ENCODE measurements at regions of chr2 and their contacts with region 1.

Region 1: DNA sequence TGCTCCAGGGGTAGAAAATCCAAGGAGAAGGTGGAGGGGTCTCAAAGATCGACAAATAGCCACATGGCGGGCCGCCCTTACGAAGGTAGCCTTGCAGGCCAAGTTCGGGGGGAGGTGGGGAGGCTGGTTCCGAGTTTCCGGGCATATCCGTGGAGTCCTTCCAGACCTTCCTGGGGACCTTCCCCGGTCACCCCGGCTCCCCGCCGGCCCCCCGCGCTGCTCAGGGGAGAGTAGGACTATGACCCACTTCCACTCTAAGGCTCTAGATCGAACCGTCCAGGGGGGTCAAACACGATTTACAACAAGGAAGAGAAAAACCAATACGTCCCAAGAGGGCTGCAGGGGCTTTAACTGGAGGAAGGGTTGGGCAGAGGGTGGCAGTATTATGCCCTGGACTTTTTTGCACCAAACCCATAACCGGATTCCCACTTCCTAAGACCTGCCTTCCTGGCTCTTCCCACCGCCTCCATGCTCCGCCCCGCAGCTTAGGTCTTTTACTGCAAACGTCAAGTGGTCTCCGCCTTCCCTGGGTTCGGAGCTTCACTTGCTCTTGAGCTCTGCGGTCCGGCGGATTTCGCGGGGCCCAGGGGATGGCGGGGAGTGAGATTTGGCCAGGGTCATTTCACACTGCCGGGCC is 780 bp upstream of the LYPD6 start:
- DNase-seq: peak; percentile 74 to 83 (median 76)
- ATAC-seq: peak; percentile 69
- H3K4me3 ChIP-seq: peak overlapping the region; percentile 23 to 46
- H3K27ac ChIP-seq: peak overlapping the region; percentile 79 to 89 (median 88)
- H3K4me1 ChIP-seq: peaks cover 18% of the 10 kb centered on the region
- H3K27me3 ChIP-seq: no peaks in the 10 kb centered on the region
- CTCF ChIP-seq: peak in 1 of 7 experiments; percentile 12
- POLR2A ChIP-seq: peak in 2 of 3 donors; percentile 56 to 70

Region 2: DNA sequence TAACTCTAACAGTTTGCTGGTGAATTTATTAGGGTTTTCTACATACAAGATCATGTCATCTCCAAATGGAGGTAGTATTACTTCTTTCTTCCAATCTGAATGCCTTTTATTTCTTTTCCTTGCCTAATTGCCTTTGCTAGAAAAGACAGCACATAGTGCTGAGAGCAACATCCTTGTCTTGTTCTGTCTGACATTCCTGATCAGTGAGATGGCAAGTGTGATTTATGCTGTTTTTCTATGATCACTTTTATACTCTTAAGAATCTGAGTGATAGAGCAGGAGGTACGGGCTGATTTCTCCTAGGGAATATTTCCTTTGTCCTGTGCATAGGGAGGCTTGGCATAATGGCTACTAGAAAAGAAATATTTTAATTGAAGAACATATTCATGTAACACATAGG is 273.9 kb before region 1 on chr2:
- intact Hi-C with region 1: no loop called
- DNase-seq: no peak
- ATAC-seq: no peak
- H3K4me3 ChIP-seq: no peak overlapping the region
- H3K27ac ChIP-seq: no peak overlapping the region
- H3K4me1 ChIP-seq: no peaks in the 10 kb centered on the region
- H3K27me3 ChIP-seq: no peaks in the 10 kb centered on the region
- CTCF ChIP-seq: no peak
- POLR2A ChIP-seq: no peak

Region 3: DNA sequence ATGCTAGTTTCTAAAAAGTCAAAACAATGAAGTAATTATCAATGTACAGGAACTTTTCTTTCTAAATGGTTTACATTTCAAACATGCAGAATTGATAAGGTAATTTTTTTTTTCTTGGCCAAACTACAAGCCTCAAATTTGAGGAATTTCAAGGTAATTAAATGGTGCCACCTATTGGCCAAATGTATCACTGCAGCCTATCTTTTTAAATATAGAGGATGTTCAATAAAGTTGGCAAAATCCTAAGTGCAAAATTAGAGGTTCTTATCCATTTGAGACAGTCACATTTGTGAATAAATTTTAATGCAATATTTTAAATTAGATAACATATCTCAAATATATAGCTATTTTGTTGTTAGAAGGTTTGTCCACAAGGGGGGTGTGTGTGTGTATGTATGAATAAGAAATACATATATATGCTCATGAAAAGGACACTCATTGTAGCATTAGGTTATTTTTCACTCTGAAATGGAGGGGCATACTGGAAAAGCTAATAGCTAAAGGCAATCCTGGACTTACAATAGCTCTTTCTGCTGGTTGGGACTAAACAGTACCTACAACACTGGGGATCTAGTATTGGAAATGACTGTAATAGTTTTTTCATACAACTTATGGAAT is 231.8 kb after region 1 on chr2:
- intact Hi-C with region 1: loop called (anchors 10 kb)
- DNase-seq: peak in 3 of 4 donors; percentile 27 to 36 (median 30)
- ATAC-seq: peak; percentile 51
- H3K4me3 ChIP-seq: no peak overlapping the region
- H3K27ac ChIP-seq: no peak overlapping the region
- H3K4me1 ChIP-seq: peaks cover 6% of the 10 kb centered on the region
- H3K27me3 ChIP-seq: no peaks in the 10 kb centered on the region
- CTCF ChIP-seq: peak; percentile 79 to 100 (median 87)
- POLR2A ChIP-seq: no peak